HEK293T (cell line): ENCODE measurements at regions of chr9 and their contacts with region 1.

Region 1: DNA sequence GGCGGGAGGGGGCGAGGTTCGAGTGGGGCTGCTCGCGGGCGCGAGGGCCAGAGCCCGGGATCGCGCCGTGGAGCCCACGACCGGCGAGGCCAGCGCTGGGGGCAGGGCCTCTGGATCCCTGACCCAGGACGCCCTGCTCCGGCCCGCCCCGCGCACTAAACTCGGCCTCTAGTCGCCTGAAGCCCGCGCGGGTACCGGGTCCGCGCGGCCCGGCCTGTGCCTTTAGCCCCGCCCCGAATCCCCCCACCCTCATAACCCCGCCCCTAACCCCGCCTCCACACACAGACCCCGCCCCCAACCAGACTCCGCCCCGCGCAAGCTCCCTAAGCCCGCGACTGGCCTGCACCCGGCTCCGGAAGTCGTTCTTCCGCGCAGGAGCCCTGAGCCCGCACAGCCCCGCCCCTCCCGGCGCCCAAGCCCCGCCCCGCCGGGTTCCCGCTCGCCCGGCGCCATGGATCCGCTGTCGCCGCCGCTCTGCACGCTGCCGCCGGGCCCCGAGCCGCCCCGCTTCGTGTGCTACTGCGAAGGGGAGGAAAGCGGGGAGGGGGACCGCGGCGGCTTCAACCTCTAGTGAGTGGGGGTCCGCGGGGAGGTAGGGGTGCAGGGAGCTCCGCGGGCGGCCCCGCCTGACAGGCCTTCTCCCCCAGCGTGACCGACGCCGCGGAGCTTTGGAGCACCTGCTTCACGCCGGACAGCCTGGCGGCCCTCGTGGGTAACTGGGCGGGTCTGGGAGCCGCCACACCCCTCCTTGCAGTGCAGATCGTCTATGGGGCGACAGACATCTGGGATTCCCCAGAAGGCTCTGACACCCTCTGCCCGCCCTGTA is at the start of gene PAXX:
- DNase-seq: peak; percentile 100

Region 2: DNA sequence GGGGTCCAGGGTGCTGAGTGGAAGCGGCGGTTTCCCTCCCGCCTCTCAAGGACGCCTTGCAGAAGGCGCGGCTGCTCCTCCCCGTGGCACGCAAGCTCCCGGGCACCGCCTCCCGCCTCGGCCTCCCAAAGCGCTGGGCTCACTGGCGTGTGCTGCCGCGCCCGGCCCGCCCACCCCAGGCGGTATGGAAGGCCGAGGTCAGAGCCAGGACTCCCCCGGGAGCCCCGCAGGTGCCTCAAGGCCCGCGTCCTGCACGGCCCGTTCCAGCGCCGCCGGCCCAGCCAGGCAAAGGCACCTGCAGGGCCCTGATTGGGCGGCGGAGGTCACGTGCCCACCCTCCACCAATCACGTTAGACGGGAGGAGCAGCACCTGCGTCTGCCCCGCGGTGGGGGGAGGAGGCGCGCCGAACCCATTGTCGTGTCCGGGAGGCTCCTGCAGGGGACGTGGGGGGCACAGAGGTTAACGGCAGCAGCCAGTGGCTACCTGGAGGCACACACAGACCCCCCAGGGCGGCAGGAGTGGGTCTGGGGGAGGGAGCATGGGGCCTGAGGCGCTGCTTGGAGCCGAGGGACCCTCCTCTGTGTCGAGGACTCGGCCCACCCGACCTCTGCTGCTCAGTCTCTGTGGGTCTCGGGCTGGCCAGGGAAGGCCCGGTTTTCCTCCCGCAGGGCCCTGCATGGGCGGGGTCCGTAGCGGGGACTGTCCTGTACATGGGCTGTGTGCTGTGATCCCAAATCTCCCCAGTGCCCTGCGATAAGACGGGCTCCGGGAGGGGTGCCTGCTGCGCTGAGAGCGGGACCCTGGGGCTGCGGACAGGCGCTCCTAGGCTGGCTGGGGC is 42.2 kb before region 1 on chr9:
- CTCF ChIA-PET with region 1: interaction called, 5 read pairs
- POLR2A ChIA-PET with region 1: interaction called, 12 read pairs
- DNase-seq: peak; percentile 98

Region 3: DNA sequence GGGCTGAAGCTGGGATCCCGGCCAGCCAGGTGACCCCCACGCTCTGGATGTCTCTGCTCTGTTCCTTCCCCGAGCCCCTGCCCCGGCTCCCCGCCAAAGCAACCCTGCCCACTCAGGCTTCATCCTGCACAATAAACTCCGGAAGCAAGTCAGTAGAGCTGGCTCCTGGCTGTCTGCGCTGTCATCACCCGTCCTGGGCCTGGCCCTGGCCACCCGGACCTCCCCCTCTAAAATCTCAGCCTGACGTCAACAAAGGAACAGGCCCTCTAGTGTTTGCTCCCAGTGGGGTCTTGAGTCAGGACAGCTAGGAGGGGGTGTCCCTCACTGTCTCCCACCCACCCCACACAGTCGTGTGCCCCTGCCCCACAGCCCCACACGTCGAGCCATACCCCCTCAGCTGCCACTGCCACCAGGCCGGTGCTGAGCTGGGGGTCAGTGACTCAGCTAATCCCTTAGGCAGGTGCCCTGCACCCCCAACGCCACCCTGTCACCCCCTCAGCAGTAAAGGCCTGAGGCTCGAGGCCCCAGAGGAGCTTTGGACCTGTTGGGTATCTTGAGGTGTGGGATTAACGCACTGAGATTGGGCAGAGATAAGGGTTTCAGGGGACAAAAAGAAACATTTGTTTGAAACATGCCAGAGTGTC is 10.5 kb before region 1 on chr9:
- CTCF ChIA-PET with region 1: no interaction called
- POLR2A ChIA-PET with region 1: interaction called, 12 read pairs
- DNase-seq: no peak

Region 4: DNA sequence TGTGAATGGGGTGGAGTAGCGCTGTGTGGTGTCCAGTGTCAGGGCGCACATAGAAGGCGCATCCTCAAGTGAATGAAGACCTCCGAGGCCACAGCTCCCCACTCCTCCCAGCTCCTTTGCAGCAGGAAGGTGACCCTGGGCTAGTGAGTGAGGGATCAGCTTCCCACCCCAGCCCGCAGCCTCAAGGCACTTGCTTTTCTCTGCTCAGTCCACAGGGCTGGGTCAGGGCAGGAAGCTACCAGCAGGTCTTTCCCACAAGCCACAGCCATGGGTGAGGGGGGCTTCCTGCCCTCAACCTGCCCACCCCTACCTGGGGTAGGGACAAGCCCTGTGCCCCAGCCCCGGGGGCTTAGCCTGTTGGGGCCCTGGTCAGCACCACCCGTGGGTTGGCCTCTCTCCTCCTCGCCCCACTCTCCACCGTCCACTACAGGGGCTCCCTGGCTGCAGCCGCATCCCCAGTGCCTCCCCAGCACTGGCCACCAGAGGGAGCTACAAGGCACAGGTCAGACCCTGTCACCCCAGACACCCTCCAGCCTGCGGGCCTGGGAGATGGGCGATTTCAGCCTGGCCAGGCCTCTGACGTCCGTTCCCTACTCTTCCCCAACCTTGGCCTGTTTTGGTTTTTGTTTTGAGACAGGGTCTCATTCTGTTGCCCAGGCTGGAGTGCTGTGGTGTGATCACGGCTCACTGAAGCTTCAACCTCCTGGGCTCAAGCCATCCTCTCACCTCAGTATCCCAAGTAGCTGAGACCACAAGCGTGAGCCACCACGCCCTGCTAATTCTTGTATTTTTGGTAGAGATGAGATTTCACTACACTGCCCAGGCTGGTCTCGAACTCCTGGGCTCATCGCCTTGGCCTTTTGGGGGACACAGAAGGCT is 37.1 kb after region 1 on chr9:
- CTCF ChIA-PET with region 1: interaction called, 14 read pairs
- POLR2A ChIA-PET with region 1: interaction called, 8 read pairs
- DNase-seq: peak; percentile 75

Region 5: DNA sequence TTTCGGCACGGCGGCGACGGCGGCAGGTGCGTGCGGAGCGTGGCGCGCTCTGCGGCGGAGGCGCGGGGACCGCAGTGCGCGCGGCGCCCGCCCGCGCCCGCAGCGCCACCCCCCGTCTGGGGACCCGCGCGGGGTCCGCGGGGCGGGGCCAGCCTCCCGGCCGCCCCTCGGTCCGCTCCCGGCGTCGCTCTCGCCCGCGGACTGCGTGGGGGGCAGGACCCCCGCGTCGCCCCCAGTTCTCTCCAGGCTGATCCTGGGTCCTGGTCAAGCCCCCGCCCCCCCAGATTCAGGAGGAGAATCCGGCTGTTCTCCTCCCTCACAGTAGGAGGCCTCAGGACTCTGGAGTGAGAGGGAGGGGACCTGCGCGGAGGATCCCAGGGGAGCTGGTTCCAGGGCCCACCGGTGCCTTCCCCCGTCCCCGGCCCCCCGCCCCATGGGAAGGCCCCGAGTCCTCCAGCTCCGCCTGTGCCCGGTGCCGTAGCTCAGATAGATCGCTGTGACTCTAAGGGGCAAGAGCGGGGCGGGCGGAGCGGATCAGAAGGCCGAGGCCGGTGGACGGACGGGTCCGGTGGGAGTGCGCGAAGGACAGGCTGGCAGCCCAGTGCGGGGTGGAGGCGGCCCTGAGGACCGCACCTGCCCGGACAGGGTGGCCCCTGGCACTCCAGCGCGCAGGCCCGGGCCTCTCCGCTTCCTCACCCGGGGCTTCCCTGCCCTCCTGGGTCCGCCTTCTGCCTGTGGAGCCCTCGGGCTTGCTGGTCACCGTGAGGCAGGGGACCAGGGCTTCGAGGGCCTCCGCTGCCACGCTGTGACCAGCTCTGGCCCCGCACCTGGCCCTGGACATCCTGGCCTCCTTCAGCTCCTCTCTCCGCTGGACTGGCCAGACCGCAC is 230.2 kb after region 1 on chr9 and contains the start of gene RNF208:
- CTCF ChIA-PET with region 1: no interaction called
- POLR2A ChIA-PET with region 1: no interaction called
- DNase-seq: no peak

Region 6: DNA sequence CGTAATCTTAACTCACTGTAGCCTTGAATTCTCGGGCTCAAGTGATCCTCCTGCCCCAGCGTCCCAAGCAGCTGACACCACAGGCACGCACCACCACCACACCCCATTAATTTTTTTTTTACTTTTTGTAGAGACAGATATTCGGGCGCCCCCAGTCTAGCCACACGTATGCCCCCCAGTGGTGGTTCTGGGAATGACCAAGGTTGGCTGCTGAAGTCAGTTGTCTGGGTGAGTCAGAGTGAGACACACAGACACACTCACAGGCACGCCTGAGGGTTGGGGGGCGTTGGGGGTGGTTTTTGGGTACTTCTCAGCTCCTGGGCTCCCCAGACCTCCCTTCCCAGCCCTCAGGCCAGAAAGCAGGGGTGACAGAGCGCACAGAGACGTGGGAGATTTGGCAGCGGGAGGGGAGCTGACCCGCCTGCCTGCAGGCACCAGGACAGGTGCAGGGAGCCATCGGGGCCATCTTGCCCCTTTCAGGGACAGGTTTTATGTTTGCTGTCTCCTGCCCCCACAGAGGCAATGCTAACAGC is 453.1 kb after region 1 on chr9:
- CTCF ChIA-PET with region 1: no interaction called
- POLR2A ChIA-PET with region 1: no interaction called
- DNase-seq: peak; percentile 58